IMR-90 (cell line): ENCODE measurements at regions of chrX and their contacts with region 1.

Region 1: GRCh38 chrX:14872851-14873675 is at the starts of genes FANCB and MOSPD2:
- DNase-seq: peak; percentile 91
- ATAC-seq: peak; percentile 98
- H3K4me3 ChIP-seq: peak within 1 kb of the TSS; percentile 96
- H3K27ac ChIP-seq: peak within 1 kb of the TSS; percentile 74
- H3K4me1 ChIP-seq: no peaks in the 10 kb centered on the region
- H3K27me3 ChIP-seq: no peaks in the 10 kb centered on the region
- CTCF ChIP-seq: no peak
- POLR2A ChIP-seq: no peak
- RAD21 ChIP-seq: no peak
- total RNA-seq, gene FANCB: 7.7 and 14.4 TPM in 2 replicates
- total RNA-seq, gene MOSPD2: 22.2 and 27.8 TPM in 2 replicates

Region 2: DNA sequence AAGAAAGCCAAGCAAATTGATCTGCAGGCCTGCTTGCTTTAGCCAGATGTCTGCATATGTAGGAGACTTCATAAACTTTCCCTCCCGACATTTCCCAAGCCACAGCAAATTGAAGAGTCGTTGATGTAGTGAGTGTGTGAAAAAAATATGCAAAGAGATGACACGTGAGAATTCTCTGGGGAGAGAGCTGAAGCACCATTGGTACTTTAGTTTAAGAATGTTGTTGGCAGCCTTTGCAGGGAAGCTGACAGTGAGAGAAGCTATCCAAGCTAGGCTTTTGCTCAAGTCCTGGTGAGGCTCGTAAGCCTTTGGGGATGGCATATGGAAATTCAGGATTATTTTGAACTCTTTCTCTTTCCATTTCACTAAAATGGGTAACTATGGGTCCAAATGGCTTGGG is 256.2 kb before region 1 on chrX:
- CTCF ChIA-PET with region 1: no interaction called
- POLR2A ChIA-PET with region 1: interaction called, 3 read pairs
- dilution Hi-C with region 1: no loop called
- in situ Hi-C with region 1: no loop called
- intact Hi-C with region 1: loop called (anchors 2 kb)
- DNase-seq: peak; percentile 38
- ATAC-seq: peak; percentile 75
- H3K4me3 ChIP-seq: no peak overlapping the region
- H3K27ac ChIP-seq: peak overlapping the region; percentile 81; the same call in 1 of the 2 replicates
- H3K4me1 ChIP-seq: peaks cover 3% of the 10 kb centered on the region
- H3K27me3 ChIP-seq: no peaks in the 10 kb centered on the region
- CTCF ChIP-seq: no peak
- POLR2A ChIP-seq: no peak
- RAD21 ChIP-seq: no peak

Region 3: DNA sequence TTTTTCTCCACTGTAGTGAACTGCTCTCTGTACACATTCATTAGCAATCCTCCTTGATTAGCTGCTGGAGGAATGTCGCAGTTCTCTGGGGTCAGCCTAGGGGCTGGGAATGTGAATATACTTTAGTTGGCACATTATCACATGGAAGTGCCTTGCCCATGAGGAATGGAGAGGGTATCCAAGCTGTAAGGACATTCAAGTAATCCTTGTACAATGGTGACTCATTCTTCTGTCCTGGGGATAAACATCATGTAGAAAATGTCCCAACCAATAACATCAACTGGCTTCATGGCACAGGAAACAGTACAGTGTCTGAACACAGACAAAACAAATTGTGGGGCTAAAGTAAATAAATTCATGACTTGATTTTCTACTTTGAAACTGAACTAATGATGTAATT is 196.6 kb before region 1 on chrX:
- CTCF ChIA-PET with region 1: no interaction called
- POLR2A ChIA-PET with region 1: no interaction called
- dilution Hi-C with region 1: no loop called
- in situ Hi-C with region 1: no loop called
- intact Hi-C with region 1: no loop called
- DNase-seq: peak; percentile 10
- ATAC-seq: no peak; the same call in 1 of the 2 replicates
- H3K4me3 ChIP-seq: no peak overlapping the region
- H3K27ac ChIP-seq: no peak overlapping the region
- H3K4me1 ChIP-seq: peaks cover 2% of the 10 kb centered on the region
- H3K27me3 ChIP-seq: no peaks in the 10 kb centered on the region
- CTCF ChIP-seq: no peak
- POLR2A ChIP-seq: no peak
- RAD21 ChIP-seq: no peak

Region 4: GRCh38 chrX:14801136-14801535 is 71.9 kb before region 1 on chrX:
- CTCF ChIA-PET with region 1: no interaction called
- POLR2A ChIA-PET with region 1: no interaction called
- dilution Hi-C with region 1: no loop called
- in situ Hi-C with region 1: no loop called
- intact Hi-C with region 1: no loop called
- DNase-seq: peak; percentile 19
- ATAC-seq: no peak
- H3K4me3 ChIP-seq: no peak overlapping the region
- H3K27ac ChIP-seq: no peak overlapping the region
- H3K4me1 ChIP-seq: 0 out of 2 replicates have a peak, but pooled peaks cover 2% of the 10 kb centered on the region
- H3K27me3 ChIP-seq: no peaks in the 10 kb centered on the region
- CTCF ChIP-seq: no peak
- POLR2A ChIP-seq: no peak
- RAD21 ChIP-seq: no peak

Region 5: DNA sequence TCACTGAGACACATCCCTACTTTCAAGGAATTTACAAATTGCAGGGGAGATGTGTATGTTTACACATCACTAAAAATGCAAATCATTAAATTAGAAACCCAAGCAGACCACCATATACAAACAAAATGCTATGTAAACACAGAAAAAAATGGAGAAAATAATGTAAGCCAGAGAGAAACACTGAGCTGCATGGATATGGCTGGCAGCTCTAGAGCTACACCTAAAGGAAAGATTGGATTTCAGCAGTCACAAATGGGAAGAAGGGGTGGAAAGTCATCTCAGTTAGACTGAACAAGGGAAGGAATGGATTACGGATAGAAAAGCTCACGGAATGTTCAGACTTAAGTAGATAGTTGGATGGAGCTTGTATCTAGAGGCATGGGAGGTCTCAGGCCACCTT is 186.4 kb after region 1 on chrX:
- CTCF ChIA-PET with region 1: no interaction called
- POLR2A ChIA-PET with region 1: no interaction called
- dilution Hi-C with region 1: no loop called
- in situ Hi-C with region 1: no loop called
- intact Hi-C with region 1: loop called (anchors 5 kb)
- DNase-seq: no peak
- ATAC-seq: peak; percentile 54
- H3K4me3 ChIP-seq: no peak overlapping the region
- H3K27ac ChIP-seq: no peak overlapping the region
- H3K4me1 ChIP-seq: peaks cover 2% of the 10 kb centered on the region; the same call in 1 of the 2 replicates
- H3K27me3 ChIP-seq: no peaks in the 10 kb centered on the region; the same call in 1 of the 2 replicates
- CTCF ChIP-seq: peak; percentile 35
- POLR2A ChIP-seq: no peak
- RAD21 ChIP-seq: peak; percentile 45